GM18951 (cell line): ENCODE measurements at regions of chr9 and their contacts with region 1.

Region 1: DNA sequence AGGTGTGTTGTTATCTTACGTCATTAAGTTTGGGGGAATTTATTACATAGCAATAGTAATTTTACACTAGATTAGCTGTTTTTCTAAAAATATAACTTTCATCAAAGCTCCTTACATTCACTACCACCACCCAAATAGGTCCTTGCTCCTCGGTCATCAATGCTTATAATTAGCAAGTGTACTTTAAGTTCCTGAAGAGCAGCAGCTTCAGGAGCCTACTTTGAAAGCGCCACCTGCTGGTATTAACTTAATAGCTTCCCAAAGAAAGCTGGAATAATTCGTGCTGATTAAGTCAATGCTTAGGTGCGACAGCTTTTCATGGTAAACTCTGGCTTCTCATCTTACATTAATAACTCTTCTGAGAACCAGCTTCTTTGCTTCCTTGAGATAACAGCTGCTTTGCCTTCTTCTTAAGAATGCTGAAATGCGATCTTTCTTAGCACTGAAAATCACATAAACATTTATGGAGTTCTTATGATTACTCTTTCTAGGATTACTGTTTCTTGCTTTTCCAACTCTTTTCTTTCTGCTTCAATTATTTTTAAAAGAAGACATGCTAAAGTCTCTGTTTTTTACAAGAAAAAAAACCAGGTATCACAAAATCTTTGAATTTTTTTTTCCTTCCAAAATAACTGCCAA is 10.0 kb upstream of the C5 start:
- POLR2A ChIP-seq: no peak

Region 2: DNA sequence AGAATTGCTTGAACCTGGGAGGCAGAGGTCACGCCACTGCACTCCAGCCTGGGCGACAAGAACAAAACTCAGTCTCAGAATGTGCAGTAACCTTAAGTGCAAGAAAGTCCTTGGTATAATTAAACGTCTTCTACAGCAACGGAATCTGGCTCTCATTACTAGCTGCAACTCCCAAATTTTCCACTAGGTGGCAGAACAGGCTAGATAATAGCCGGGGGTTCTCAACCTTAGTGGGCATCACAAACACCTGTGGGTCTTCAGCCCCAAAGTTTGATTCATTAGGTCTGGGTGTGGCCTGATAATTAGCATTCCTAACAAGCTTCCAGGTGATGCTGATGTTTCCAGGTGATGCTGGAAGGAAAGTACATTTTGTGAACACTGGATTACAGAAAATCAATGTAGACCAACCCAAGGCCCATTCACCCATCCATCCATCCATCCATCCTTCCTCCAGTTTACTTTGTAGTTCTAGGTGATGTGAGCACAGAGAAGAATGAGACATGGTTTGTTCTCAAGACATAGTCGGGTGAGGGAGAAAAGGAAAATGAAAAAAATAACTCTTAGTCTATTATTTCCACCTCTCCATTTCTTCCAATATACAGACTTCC is 304.2 kb before region 1 on chr9:
- in situ Hi-C with region 1: loop called (anchors 10 kb)
- POLR2A ChIP-seq: no peak